Activated CD8-positive, alpha-beta T cell treated with anti-CD3 and anti-CD28 coated beads for 36 hours (primary cell): ENCODE measurements at regions of chr22 and their contacts with region 1.

Region 1: DNA sequence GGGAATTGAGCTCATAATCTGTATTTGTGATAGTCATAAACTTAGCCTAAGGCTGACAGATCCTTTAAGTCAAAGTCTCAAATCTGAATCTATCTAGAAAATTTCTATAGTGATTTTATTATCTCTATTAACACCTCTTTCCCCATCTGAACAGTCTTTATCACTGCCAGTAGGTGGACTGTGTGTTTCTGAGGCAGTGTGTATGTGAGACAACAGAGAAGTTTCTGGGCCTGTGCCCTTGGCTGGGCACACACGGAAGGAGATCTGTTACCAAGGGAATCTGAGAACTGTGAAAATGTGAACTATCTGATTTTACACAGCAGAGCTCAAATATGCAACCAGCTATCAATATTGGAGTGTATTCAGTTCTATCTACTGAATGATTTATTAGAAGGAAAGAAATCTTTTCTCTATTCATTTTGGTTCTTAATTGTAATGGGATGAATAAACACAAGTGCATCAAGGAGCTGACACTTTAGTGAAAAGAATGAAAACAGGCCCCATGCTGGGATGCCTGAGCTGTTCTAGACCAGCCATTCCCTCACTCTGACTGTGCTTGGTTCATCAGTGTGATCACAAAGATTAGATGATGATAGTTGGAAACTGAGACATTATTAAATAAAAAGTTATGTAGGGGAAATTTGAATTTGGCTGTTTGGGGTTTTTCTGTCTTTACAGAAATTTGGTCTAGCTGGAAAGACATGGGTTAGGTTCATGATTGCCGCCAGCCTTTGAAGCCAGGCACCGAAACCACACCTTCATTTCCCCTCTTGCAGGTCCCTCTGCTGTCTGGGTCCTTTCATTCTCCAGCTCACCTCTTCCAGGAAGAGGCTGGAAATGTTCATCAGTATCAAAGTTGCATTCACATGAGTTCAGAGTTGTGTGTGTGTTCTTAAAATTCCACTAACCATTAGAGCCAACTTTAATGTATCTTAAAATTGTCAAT is 68.1 kb downstream of the LIF start:
- DNase-seq: peak; percentile 76
- ATAC-seq: peak; percentile 81
- H3K4me3 Mint-ChIP-seq: peak overlapping the region; percentile 26
- H3K27ac Mint-ChIP-seq: peak overlapping the region; percentile 94
- H3K4me1 Mint-ChIP-seq: peaks cover 62% of the 10 kb centered on the region
- H3K27me3 Mint-ChIP-seq: no peaks in the 10 kb centered on the region
- CTCF ChIP-seq: peak; percentile 45

Region 2: DNA sequence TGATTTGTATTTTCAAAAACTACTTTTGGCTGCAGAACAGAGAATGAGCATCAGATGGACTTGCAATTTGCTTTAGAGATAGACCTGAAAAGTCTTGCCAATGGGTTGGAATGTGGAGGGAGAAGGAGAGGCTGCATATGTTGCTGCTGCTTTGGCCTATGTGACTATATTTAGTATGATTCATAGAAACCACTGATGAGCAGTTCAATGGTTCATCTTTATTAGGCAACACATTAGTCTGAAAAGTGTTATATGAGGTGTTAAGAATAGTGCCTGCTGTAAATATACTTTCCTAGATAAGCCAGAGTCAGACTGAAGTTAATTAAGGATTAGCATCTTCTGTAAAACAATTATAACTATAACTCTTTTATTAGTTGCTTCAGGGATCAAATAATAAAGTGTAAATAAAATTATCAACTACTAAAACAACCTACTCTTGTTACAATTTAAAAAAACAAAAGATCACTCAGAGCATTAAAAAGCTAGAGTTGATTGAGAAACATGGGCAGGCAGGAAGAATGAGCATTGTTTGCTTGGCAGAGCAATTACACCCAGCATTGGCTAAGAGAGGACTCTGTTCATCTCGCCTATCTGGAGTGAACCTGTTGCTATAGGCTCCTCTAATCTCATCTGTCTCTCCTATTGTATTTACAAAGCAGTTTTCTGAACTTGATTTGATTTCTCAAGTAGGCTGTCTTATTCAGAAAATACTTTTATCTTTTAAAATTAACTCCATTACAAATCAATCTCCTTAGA is 61.9 kb before region 1 on chr22:
- CTCF ChIA-PET with region 1: interaction called, 16 read pairs
- POLR2A ChIA-PET with region 1: no interaction called
- intact Hi-C with region 1: no loop called
- DNase-seq: no peak
- ATAC-seq: peak; percentile 74
- H3K4me3 Mint-ChIP-seq: no peak overlapping the region
- H3K27ac Mint-ChIP-seq: no peak overlapping the region
- H3K4me1 Mint-ChIP-seq: peaks cover 13% of the 10 kb centered on the region
- H3K27me3 Mint-ChIP-seq: peaks cover 6% of the 10 kb centered on the region
- CTCF ChIP-seq: no peak

Region 3: DNA sequence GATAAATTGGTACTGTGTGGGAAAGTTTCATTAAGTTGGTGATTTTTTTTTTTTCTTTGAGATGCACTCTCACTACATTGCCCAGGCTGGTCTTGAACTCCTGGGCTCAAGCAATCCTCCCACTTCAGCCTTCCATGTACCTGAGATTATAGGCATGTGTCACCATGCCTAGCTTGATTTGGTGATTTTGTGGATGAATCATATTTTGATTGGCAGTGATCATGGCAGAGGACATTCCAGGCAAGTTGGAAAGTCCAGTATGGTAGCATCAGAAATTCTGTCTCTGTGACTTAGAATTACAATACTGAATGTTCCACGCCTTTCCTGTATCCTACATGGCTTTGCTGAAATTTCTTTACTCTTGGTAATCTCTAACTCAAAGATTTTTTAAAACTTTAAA is 48.8 kb before region 1 on chr22:
- CTCF ChIA-PET with region 1: no interaction called
- POLR2A ChIA-PET with region 1: no interaction called
- intact Hi-C with region 1: no loop called
- DNase-seq: no peak
- ATAC-seq: no peak
- H3K4me3 Mint-ChIP-seq: no peak overlapping the region
- H3K27ac Mint-ChIP-seq: no peak overlapping the region
- H3K4me1 Mint-ChIP-seq: peaks cover 5% of the 10 kb centered on the region
- H3K27me3 Mint-ChIP-seq: no peaks in the 10 kb centered on the region
- CTCF ChIP-seq: no peak

Region 4: GRCh38 chr22:30159561-30160353 is 18.7 kb before region 1 on chr22:
- CTCF ChIA-PET with region 1: interaction called, 12 read pairs
- POLR2A ChIA-PET with region 1: interaction called, 5 read pairs
- intact Hi-C with region 1: no loop called
- DNase-seq: peak; percentile 27
- ATAC-seq: peak; percentile 47
- H3K4me3 Mint-ChIP-seq: peak overlapping the region; percentile 6
- H3K27ac Mint-ChIP-seq: peak overlapping the region; percentile 97
- H3K4me1 Mint-ChIP-seq: peaks cover 57% of the 10 kb centered on the region
- H3K27me3 Mint-ChIP-seq: peaks cover 2% of the 10 kb centered on the region
- CTCF ChIP-seq: no peak

Region 5: DNA sequence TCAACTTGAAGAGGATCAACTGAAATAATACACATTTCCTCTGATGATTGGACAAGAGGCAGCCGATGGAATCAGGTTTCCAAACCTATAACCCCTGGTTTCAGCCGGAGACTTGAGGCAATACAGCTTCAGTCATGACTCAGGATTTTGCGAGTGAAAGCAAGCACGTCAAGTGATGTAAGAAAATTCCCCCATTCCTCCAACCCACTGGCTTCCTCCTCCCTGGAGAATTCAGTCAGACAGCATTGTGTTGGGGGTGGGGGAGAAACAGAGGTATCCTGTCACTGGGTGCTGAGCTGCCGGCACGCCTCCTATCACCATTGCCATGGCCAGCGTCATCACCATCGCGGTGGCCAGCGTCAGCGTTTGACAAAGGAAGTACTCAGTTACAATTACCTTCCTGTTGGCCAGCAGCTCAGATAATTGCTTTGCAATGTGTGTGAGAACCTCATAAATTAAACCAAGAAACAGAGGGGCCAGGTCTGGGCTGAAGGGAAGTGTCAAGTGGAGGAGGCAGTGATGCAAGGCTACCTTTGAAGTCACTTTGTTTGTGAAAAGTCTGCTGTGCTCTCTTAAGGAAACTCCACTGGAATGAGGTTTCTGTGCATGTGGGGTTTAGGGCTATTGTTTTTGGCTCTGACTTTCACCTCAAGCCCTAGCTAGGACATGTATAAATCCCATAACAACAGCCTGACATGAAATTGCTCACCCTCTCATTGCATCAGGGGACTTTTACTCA is 17.9 kb after region 1 on chr22:
- CTCF ChIA-PET with region 1: interaction called, 16 read pairs
- POLR2A ChIA-PET with region 1: interaction called, 10 read pairs
- intact Hi-C with region 1: no loop called
- DNase-seq: peak; percentile 82
- ATAC-seq: peak; percentile 88
- H3K4me3 Mint-ChIP-seq: peak overlapping the region; percentile 28
- H3K27ac Mint-ChIP-seq: peak overlapping the region; percentile 89
- H3K4me1 Mint-ChIP-seq: peaks cover 60% of the 10 kb centered on the region
- H3K27me3 Mint-ChIP-seq: no peaks in the 10 kb centered on the region
- CTCF ChIP-seq: no peak

Region 6: GRCh38 chr22:30245985-30246901 is 67.8 kb after region 1 on chr22 and contains the start of gene LIF:
- CTCF ChIA-PET with region 1: no interaction called
- POLR2A ChIA-PET with region 1: interaction called, 4 read pairs
- intact Hi-C with region 1: loop called (anchors 5 kb)
- DNase-seq: peak; percentile 74
- ATAC-seq: peak; percentile 57
- H3K4me3 Mint-ChIP-seq: peak within 1 kb of the TSS; percentile 97
- H3K27ac Mint-ChIP-seq: peak within 1 kb of the TSS; percentile 94
- H3K4me1 Mint-ChIP-seq: peaks cover 64% of the 10 kb centered on the region
- H3K27me3 Mint-ChIP-seq: peaks cover 1% of the 10 kb centered on the region
- CTCF ChIP-seq: no peak
- total RNA-seq, gene LIF: 160 to 161 TPM